Activated T-helper 2 cell treated with anti-CD3 and anti-CD28 coated beads, Interferon-gamma antibody, Interleukin-2, Interleukin-4, amounts not matched to agents 10 μg/mL and 5 μg/mL and 100 μg/mL, durations not matched to agents 14 hours and 24 hours and 36 hours (primary cell): ENCODE measurements at regions of chr7 and their contacts with region 1.

Region 1: DNA sequence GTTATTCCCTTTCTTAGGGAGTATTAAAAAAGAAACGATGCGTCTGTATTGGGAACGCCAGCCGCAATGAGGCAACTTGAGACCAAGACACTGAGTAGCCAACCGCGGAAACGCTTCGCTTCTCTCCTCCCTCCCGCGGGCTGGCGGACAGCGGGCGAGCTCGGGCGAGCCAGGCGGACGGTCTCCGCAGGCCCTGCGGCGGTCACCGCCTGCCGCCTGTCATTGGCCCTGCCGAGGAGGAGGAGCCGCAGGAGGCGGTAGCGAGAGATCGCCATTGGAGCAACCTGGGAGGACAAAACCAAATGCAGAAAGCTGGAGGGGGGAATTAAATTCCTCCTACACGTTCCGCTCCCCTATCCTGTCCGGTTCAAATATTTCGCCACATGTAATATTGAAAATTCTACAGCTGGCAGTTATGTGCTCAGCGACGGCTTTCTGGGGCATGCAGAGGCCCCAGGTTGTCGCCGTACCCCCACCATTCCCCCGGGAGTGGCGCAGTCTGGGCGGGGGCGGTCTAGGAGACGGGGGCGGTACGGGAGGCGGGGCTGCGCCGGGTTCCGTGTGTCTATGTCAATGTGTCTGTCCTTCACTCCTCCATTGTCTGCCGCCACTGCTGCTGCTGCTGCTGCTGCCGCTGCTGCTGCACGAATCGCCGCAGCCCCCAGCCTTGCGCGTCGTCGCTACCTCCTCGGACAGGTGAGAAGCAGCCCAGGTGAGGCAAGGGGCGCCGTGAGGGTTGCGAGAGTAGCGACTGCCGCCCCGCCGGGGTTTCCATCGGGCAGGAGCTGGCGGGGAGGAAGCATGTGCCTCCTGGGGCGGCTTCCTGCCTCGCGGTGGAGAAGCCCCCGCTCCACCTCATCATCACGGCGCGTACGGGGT is at the starts of genes ANKMY2 and BZW2:
- DNase-seq: peak; percentile 93
- H3K4me3 Mint-ChIP-seq: peak within 1 kb of the TSS; percentile 97
- H3K27ac Mint-ChIP-seq: peak within 1 kb of the TSS; percentile 97
- H3K4me1 Mint-ChIP-seq: peaks cover 51% of the 10 kb centered on the region
- H3K27me3 Mint-ChIP-seq: no peaks in the 10 kb centered on the region
- total RNA-seq, gene ANKMY2: 8.7 TPM in 2 replicates
- total RNA-seq, gene BZW2: 82.9 and 90.2 TPM in 2 replicates

Region 2: DNA sequence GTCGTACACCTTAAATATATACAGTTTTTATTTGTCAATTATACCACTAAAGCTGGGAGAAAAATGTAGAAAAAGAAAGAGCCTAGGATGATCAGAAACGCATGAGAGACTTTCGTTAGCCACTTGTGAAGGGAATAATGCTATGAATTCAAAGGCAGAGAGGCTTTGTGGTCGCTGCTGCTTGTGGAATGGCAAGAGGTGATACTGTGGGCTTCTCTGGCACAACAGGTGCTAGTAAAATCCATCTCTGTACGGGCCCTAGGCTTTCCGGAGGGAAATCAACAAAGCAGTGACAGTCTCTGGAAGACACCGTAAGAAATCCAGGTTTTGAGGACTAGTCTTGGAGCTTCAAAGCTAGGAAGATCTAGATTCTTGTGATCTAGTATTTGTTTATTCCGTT is 66.6 kb before region 1 on chr7:
- intact Hi-C with region 1: no loop called
- DNase-seq: no peak
- H3K4me3 Mint-ChIP-seq: no peak overlapping the region
- H3K27ac Mint-ChIP-seq: no peak overlapping the region
- H3K4me1 Mint-ChIP-seq: no peaks in the 10 kb centered on the region
- H3K27me3 Mint-ChIP-seq: peaks cover 8% of the 10 kb centered on the region

Region 3: GRCh38 chr7:16619979-16620408 is 25.8 kb before region 1 on chr7:
- intact Hi-C with region 1: loop called (anchors 1 kb)
- DNase-seq: no peak
- H3K4me3 Mint-ChIP-seq: peak overlapping the region; percentile 7
- H3K27ac Mint-ChIP-seq: peak overlapping the region; percentile 82
- H3K4me1 Mint-ChIP-seq: peaks cover 20% of the 10 kb centered on the region
- H3K27me3 Mint-ChIP-seq: no peaks in the 10 kb centered on the region

Region 4: DNA sequence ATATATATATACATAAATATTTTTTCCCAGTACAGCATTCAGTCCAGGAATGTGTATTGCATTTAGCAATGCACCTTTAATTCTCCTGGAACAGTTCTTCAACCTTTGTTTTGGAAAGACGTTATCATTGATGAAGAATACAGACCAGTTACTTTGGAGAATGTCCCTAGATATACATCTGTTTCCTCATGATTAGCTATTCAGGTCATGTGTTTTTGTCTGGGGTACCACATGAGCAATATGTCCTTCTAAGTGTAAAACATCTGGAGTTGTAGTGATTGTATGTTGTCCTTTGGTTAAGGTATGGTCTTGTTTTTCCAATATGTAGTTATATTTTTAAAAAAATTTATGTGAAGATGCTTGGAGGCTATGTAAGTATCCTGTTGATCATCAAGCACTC is 10.3 kb after region 1 on chr7:
- intact Hi-C with region 1: no loop called
- DNase-seq: no peak
- H3K4me3 Mint-ChIP-seq: no peak overlapping the region
- H3K27ac Mint-ChIP-seq: no peak overlapping the region
- H3K4me1 Mint-ChIP-seq: peaks cover 34% of the 10 kb centered on the region
- H3K27me3 Mint-ChIP-seq: no peaks in the 10 kb centered on the region

Region 5: GRCh38 chr7:16684935-16685334 is 39.1 kb after region 1 on chr7:
- intact Hi-C with region 1: loop called (anchors 5 kb)
- DNase-seq: no peak
- H3K4me3 Mint-ChIP-seq: no peak overlapping the region
- H3K27ac Mint-ChIP-seq: peak overlapping the region; percentile 79
- H3K4me1 Mint-ChIP-seq: peaks cover 20% of the 10 kb centered on the region
- H3K27me3 Mint-ChIP-seq: no peaks in the 10 kb centered on the region

Region 6: GRCh38 chr7:17152721-17153120 is 506.9 kb after region 1 on chr7:
- intact Hi-C with region 1: loop called (anchors 10 kb)
- DNase-seq: no peak
- H3K4me3 Mint-ChIP-seq: no peak overlapping the region
- H3K27ac Mint-ChIP-seq: peak overlapping the region; percentile 31
- H3K4me1 Mint-ChIP-seq: peaks cover 52% of the 10 kb centered on the region
- H3K27me3 Mint-ChIP-seq: no peaks in the 10 kb centered on the region